ENCODE measurements at regions of chr1 and their contacts with region 1.

Region 1: GRCh38 chr1:33633019-33633801 is 160.8 kb downstream of the ZSCAN20 start:
- DNase-seq: peak; percentile 77
- H3K4me3 ChIP-seq: no peak overlapping the region
- H3K27ac ChIP-seq: no peak overlapping the region
- H3K4me1 ChIP-seq: no peaks in the 10 kb centered on the region
- H3K27me3 ChIP-seq: no peaks in the 10 kb centered on the region
- CTCF ChIP-seq: peak; percentile 96 to 99
- POLR2A ChIP-seq: no peak

Region 2: DNA sequence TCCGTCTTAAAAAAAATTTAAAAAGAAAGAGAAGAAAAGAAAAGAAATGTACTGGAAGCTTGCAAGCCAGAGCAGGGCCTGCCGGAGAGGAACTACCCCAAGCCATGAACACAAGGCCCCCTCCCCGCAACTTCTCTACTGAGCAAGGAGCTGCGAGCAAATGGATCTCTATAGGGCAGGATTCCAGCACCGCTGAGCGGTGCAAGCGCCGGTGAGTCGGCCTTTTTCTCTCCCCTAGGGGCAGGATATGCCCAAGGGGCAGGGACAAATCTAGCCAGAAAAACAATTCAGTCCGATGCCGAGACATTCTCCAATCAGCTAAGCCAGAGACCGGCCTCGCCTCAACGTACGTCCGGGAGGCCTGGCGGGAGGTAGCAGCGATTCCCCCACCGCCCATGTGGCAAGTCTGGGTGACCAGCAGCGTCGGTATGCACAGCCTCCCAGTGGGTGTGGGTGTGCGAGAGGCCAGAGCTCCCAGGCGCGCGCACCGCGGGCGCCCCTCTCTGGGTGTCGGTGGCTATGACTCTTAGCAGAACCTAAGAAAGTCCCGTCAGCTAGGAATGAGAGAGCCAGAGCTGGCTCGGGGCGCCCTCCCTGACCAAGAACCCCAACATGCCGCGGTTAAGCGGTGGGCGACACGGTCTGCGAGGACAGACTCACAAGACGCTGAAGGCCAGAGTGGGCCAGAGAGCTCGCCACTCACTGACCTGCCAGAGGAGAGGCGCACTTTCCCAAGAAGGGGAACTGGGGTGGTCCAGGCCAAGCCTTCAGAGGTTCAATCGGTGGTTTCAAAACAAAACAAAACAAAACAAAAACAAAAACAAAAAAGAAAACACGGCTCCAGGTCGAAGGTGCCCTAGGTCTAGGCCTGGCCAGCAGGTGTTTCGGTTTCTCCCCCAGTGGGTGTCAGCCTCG is 529.9 kb after region 1 on chr1:
- CTCF ChIA-PET with region 1: interaction called, 20 read pairs
- POLR2A ChIA-PET with region 1: no interaction called
- dilution Hi-C with region 1: no loop called
- intact Hi-C with region 1: no loop called
- DNase-seq: peak; percentile 20
- H3K4me3 ChIP-seq: peak overlapping the region in 1 of 3 experiments; percentile 8
- H3K27ac ChIP-seq: no peak overlapping the region
- H3K4me1 ChIP-seq: peaks cover 5% of the 10 kb centered on the region
- H3K27me3 ChIP-seq: peaks cover 29 to 31% of the 10 kb centered on the region in 2 experiments
- CTCF ChIP-seq: peak; percentile 13 to 47
- POLR2A ChIP-seq: no peak

Region 3: GRCh38 chr1:34681480-34682451 is 1048.6 kb after region 1 on chr1:
- CTCF ChIA-PET with region 1: interaction called, 5 read pairs
- POLR2A ChIA-PET with region 1: no interaction called
- dilution Hi-C with region 1: no loop called
- intact Hi-C with region 1: loop called (anchors 1 kb)
- DNase-seq: peak; percentile 46
- H3K4me3 ChIP-seq: no peak overlapping the region
- H3K27ac ChIP-seq: no peak overlapping the region
- H3K4me1 ChIP-seq: no peaks in the 10 kb centered on the region
- H3K27me3 ChIP-seq: no peaks in the 10 kb centered on the region
- CTCF ChIP-seq: peak; percentile 56 to 76
- POLR2A ChIP-seq: no peak

Region 4: GRCh38 chr1:34742667-34743270 is 1109.6 kb after region 1 on chr1:
- CTCF ChIA-PET with region 1: interaction called, 338 read pairs
- POLR2A ChIA-PET with region 1: no interaction called
- dilution Hi-C with region 1: no loop called
- intact Hi-C with region 1: loop called (anchors 1 kb)
- DNase-seq: peak; percentile 61
- H3K4me3 ChIP-seq: no peak overlapping the region
- H3K27ac ChIP-seq: no peak overlapping the region
- H3K4me1 ChIP-seq: no peaks in the 10 kb centered on the region
- H3K27me3 ChIP-seq: peaks cover 2 to 3% of the 10 kb centered on the region in 2 experiments
- CTCF ChIP-seq: peak; percentile 93 to 99
- POLR2A ChIP-seq: no peak

Measured in endothelial cell of umbilical vein (primary cell).